Activated CD8-positive, alpha-beta memory T cell treated with anti-CD3 and anti-CD28 coated beads, Interleukin-2, amount 10 ng/mL, durations not matched to agents 7 days and 5 days (primary cell): ENCODE measurements at regions of chr19 and their contacts with region 1.

Region 1: GRCh38 chr19:36128392-36128736 is 11.5 kb upstream of the CAPNS1 start:
- DNase-seq: peak; percentile 47
- ATAC-seq: no peak
- H3K4me3 Mint-ChIP-seq: peak overlapping the region; percentile 86
- H3K27ac Mint-ChIP-seq: peak overlapping the region; percentile 94
- H3K4me1 Mint-ChIP-seq: peaks cover 24% of the 10 kb centered on the region
- H3K27me3 Mint-ChIP-seq: no peaks in the 10 kb centered on the region

Region 2: DNA sequence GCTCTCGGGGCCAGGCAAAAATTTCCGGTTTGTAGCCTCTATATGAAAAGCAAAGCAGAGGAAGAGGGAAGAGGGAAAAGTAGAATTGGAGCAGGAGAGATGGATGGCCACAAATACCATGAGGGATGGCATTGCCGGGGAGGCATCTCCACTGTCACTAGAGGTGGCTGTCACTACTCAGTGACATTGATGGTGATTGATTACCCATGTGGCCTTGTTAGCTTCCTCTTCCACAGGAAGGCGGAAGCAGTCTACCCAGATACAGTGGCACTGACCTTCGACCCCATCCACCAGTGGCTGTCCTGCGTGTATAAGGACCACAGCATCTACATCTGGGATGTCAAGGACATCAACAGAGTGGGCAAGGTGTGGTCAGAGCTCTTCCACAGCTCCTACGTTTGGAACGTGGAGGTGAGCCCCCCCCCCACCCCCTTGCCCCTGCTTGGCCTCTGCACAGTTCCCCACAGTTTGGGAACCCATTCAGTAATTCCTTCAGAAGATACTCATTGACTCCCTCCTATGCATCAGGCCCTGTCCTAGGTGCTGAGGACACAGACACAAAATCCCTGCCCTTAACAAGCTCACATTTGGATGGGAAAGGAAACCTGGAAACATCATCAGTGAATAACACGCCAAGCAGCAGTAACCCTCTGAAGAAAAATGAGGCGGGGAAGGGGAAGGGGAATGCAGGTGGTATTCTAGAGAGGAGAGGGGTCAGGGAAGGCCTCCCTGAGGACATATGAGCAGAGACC is 55.1 kb before region 1 on chr19:
- CTCF ChIA-PET with region 1: no interaction called
- DNase-seq: no peak
- ATAC-seq: no peak
- H3K4me3 Mint-ChIP-seq: no peak overlapping the region
- H3K27ac Mint-ChIP-seq: no peak overlapping the region
- H3K4me1 Mint-ChIP-seq: no peaks in the 10 kb centered on the region
- H3K27me3 Mint-ChIP-seq: no peaks in the 10 kb centered on the region

Region 3: DNA sequence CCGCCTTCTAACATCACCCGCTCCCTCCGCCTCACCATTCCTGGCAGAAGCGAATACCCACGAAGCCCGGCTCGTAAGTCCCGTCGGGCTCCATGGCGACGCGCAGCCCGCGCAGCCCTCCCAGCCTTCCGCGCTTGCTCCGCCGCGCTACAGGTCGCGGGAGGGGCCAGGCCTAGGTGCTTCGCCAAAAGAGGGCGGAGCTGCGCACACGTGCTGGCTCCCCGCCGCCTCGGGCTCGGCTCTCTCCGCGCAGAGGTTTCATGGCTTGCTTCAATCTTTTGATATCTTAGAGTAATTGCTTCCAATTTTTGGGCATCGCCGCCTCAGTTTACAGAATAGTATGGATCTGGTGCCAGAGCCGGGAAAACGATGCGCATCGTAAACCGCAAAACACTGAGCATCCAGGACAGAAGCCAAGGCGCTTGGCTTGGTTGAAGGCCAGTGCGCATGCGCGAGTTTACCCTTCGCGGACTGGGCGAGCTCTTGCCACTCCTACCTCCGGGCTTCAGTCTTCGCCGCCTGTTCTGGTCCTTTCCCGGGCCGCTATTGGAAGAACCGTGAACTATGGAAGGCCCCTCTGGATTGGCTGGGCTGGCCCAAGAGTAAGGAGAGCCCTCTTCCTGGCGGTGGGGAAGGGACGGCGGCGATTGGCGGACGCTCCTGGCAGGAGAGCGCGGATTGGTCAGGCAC is 13.5 kb before region 1 on chr19 and contains the start of gene POLR2I:
- CTCF ChIA-PET with region 1: interaction called, 24 read pairs
- DNase-seq: peak; percentile 100
- ATAC-seq: peak; percentile 91
- H3K4me3 Mint-ChIP-seq: peak within 1 kb of the TSS; percentile 91
- H3K27ac Mint-ChIP-seq: peak within 1 kb of the TSS; percentile 94
- H3K4me1 Mint-ChIP-seq: peaks cover 35% of the 10 kb centered on the region
- H3K27me3 Mint-ChIP-seq: peaks cover 2% of the 10 kb centered on the region
- total RNA-seq, gene POLR2I: 63.2 to 65.3 TPM

Region 4: DNA sequence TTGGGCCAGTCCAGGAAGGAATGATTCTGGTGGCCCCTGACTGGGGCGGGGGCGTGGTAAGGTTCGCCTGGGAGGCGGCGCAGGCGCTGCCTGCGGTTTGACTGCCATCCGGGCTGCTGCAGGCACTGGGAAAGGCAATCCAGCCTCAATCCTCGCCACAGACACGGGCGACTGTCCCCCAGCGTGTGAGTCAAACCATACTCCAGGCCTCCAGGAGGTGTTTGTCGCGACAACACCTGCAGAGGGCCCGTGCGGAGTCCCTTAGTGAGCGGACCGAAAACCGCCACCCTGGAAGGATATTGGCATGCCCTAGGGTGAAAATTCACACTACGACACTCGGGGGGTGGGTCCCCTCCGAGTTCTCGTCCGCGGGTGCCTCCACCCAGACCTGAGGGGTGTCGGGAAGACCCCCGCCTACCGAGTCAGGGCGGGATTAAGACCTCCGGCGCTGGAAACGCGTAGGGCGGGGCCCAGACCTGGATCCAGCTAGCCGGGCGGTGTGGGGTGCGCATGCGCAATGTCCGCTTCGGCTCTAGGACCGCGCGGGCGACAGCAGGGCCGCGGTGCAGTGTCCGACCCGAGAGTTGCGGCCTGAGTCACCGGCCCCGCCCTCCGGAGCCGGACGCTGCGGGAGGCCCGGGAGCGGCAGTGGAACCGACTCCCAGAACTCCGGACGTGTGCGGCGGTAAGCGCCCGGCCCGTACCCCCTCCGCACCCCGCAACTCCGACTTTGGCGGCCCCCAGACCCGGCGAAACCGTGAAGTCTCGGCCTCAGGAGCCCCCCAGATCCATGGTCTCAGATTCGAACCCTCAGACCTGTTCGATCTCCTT is 11.3 kb after region 1 on chr19 and contains the start of gene CAPNS1:
- CTCF ChIA-PET with region 1: interaction called, 17 read pairs
- DNase-seq: peak; percentile 97
- ATAC-seq: peak; percentile 81
- H3K4me3 Mint-ChIP-seq: peak within 1 kb of the TSS; percentile 93
- H3K27ac Mint-ChIP-seq: peak within 1 kb of the TSS; percentile 93
- H3K4me1 Mint-ChIP-seq: peaks cover 30% of the 10 kb centered on the region
- H3K27me3 Mint-ChIP-seq: no peaks in the 10 kb centered on the region
- total RNA-seq, gene CAPNS1: 411 to 479 TPM

Region 5: GRCh38 chr19:36169084-36169760 is 40.9 kb after region 1 on chr19:
- CTCF ChIA-PET with region 1: interaction called, 150 read pairs
- DNase-seq: no peak
- ATAC-seq: no peak
- H3K4me3 Mint-ChIP-seq: no peak overlapping the region
- H3K27ac Mint-ChIP-seq: no peak overlapping the region
- H3K4me1 Mint-ChIP-seq: peaks cover 5% of the 10 kb centered on the region
- H3K27me3 Mint-ChIP-seq: peaks cover 3% of the 10 kb centered on the region

Region 6: GRCh38 chr19:36214386-36215275 is 86.3 kb after region 1 on chr19 and contains the starts of genes ZNF146 and ZNF565:
- CTCF ChIA-PET with region 1: interaction called, 21 read pairs
- DNase-seq: peak; percentile 99
- ATAC-seq: peak; percentile 93
- H3K4me3 Mint-ChIP-seq: no peak within 1 kb of the TSS
- H3K27ac Mint-ChIP-seq: no peak within 1 kb of the TSS
- H3K4me1 Mint-ChIP-seq: peaks cover 20% of the 10 kb centered on the region
- H3K27me3 Mint-ChIP-seq: no peaks in the 10 kb centered on the region
- total RNA-seq, gene ZNF146: 55.1 to 75.6 TPM
- total RNA-seq, gene ZNF565: 1.6 to 2.3 TPM